ENCODE measurements at regions of chr15 and their contacts with region 1.

Region 1: DNA sequence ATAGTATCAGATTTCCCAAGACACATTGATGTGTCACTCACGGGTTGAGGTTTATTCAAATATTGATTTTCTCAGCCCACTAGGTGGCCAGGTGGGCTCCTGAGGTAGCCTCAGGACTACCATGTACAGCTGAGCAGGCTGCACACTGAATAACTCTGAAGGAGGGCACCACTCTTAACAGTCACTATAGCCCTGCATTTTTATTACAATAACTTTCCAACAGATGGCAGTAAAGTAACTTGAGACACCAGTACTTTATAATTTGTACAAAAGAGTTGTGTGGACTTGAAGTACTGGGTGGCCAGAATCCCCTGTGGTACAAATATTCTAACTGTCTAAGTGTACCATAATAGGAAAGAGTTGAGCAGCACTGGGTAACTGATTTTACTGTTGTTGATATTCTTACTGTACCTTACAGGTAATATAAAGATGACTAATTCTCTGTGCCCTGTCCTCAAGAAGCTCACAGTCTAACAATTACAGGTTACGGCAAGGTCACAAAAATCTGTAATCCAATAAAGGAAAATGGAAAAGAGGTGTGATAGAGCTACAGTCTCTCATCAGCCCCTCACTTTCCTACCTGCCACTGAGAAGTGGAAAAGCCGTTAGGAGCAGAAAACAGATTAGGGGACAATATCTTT is 76.0 kb downstream of the ETFA start:
- DNase-seq: peak; percentile 47 to 96
- H3K4me3 ChIP-seq: no peak overlapping the region
- H3K4me1 ChIP-seq: peaks cover 20% of the 10 kb centered on the region
- H3K27me3 ChIP-seq: no peaks in the 10 kb centered on the region

Region 2: DNA sequence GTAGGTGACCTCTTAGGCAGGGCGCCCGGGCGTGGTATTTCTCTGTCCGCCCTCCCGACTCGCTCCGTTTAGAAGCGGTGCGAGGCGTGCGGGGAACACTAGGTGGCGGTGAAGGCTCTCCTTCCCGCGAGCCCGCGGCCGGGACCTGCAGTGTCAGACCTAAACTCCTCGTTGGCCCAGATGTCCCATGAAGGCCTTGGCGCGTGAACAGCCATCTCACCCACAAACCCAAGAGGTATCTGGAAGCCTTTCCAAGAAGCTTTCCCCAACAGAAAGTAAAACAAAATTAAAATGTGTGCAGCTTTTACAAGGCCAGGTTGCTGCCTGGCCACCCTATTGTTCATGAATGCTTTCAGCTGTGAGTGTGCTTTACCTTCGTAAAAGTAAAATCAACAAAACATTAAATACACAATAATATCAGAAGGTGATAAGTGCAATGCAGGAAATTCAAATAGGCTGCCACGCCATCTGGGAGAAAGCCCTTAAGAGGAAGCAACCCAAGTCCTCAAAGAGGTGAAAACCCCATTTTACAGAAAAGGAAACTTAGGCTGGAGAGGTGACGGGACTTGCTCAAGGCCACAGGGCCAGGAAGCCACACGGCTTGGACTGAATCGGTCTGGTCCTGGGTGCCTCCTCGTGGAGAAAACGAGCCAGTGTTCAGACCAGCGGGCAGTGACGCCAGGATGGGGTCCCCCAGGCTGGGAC is 44.3 kb before region 1 on chr15:
- in situ Hi-C with region 1: no loop called
- DNase-seq: peak; percentile 94 to 97
- H3K4me3 ChIP-seq: no peak overlapping the region
- H3K4me1 ChIP-seq: peaks cover 3% of the 10 kb centered on the region
- H3K27me3 ChIP-seq: no peaks in the 10 kb centered on the region

Region 3: GRCh38 chr15:76330080-76330680 is 94.9 kb after region 1 on chr15:
- in situ Hi-C with region 1: loop called (anchors 5 kb)
- DNase-seq: peak; percentile 78 to 85
- H3K4me3 ChIP-seq: no peak overlapping the region
- H3K4me1 ChIP-seq: no peaks in the 10 kb centered on the region
- H3K27me3 ChIP-seq: no peaks in the 10 kb centered on the region; the same call in 1 of the 2 replicates

Measured in HAP-1 (cell line).